ENCODE measurements at regions of chr14 and their contacts with region 1.

Region 1: DNA sequence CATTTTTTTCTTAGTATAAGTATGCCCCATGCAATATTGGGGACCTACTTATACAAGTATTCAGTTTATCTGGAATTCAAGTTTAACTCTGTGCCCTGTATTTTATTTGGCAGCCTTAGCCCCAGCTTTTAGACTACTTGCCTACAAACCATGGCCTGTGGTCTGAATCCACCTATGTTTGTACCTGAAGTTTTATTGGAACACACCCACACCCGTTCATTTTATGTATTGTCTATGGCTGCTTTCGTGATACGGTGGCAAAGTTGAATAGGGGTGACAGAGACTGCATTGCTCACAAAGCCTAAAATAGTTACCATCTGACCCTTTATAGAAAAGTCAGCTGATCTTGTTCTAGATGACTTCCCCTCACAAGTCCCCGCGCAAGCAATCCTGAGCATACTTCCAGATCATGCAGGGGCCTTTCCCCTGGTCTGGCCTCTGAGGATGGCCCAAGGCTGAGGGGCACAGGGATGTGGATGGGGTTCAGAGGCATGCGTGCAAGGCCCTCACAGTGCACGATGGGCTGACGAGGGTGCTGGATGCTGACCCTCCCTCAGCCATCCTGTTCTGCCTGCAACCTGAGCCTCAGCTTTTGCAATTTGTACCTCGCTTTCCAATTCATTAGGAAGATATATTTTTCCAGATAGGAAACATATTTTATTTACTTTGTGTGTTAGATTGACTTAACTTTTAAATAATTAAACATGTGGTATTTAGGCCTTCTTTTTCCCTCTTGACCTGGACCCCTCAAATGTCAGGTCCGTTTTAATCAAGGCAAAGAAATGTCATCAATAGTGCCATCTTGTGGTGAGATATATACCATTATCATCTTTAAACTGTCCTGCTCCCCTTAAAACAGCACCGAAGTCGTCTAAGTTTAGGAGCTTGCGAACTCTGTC is 527.3 kb upstream of the CCDC196 start:
- DNase-seq: peak; percentile 24 to 30 (median 26)
- ATAC-seq: peak; percentile 76
- H3K4me3 ChIP-seq: no peak overlapping the region
- H3K27ac ChIP-seq: no peak overlapping the region
- H3K4me1 ChIP-seq: no peaks in the 10 kb centered on the region
- H3K27me3 ChIP-seq: no peaks in the 10 kb centered on the region; a peak in 1 of 5 replicates
- CTCF ChIP-seq: peak in 1 of 3 experiments; percentile 50; a peak in 3 of 6 replicates
- EP300 ChIP-seq: no peak
- POLR2A ChIP-seq: no peak
- RAD21 ChIP-seq: peak; percentile 50 to 63

Region 2: DNA sequence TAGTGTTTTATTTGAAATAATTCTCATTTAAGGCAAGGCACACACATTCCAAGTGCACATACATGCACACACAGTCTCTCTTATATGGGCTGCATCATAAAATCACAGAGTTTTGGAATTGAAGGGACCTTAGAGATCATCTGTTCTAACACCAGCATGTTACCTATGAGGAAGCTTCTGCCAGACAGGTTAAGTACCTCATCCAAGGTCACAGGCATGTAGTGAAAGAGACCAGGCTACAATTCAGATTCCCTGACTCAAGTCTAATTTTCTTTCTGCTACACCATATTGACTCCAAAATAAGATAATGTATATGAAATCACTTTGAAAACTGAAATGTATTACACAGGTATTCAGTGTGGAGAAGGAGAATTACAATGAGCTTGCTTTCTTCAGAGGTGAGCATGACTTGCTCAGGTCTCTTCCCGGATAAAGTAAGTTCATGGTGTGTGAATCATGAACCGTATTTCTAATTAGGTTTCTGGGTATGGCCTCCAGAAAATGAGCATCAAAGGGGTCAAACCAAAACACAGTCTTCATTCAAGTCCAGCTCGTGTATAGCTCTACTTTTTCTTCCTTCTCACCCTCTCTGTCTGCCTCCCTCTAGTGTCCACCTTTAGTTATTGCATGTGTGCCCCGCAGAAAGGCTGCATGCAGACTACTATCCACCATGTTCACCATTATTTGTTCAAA is 134.5 kb before region 1 on chr14:
- CTCF ChIA-PET with region 1: no interaction called
- POLR2A ChIA-PET with region 1: no interaction called
- in situ Hi-C with region 1: no loop called
- intact Hi-C with region 1: loop called (anchors 10 kb)
- DNase-seq: peak; percentile 54 to 66 (median 62)
- ATAC-seq: peak; percentile 87
- H3K4me3 ChIP-seq: no peak overlapping the region
- H3K27ac ChIP-seq: no peak overlapping the region
- H3K4me1 ChIP-seq: no peaks in the 10 kb centered on the region
- H3K27me3 ChIP-seq: peaks cover 9 to 27% of the 10 kb centered on the region in 2 experiments; a peak in 4 of 5 replicates
- CTCF ChIP-seq: peak; percentile 60 to 74 (median 65)
- EP300 ChIP-seq: no peak
- POLR2A ChIP-seq: no peak
- RAD21 ChIP-seq: peak; percentile 67 to 69

Region 3: DNA sequence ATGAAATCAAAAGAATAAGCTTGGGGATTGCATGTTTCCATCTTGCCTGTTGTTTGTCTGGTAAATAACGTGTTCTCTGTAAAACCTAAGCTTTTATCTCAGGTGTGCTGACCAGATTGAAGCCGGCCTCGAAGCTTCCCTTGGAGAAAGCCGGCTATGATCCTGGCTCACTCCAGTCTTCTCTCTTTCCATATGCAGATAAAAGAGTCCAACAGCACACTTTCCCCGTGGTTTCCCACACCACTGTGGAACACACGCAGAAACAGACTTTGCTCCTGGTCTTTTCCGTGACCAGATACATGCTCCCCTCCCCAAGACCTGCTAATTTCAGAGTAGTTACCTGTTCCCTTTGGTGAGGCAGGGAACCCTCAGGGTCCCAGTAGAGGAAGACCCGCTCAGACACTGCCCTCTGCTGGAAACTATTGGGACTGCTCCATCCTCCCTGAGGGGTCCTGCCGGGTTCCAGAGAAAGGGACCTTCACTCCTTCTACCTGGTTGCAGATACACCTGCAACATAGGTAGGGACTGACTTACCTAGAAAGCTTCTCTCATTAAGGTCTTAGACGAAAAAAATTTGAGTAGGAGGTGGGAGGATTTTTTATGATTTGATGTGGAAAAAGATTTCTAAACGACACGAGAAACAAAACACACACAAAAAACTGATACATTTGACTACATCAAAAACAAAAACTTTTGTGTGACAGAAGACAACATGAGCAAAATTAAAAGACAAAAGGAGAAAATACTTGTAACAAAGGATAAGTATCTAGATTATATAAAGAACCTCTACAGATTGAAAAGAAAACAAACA is 111.8 kb after region 1 on chr14:
- CTCF ChIA-PET with region 1: no interaction called
- POLR2A ChIA-PET with region 1: no interaction called
- in situ Hi-C with region 1: no loop called
- intact Hi-C with region 1: loop called (anchors 2 kb)
- DNase-seq: peak; percentile 47 to 76 (median 70)
- ATAC-seq: peak; percentile 88
- H3K4me3 ChIP-seq: no peak overlapping the region
- H3K27ac ChIP-seq: no peak overlapping the region
- H3K4me1 ChIP-seq: no peaks in the 10 kb centered on the region
- H3K27me3 ChIP-seq: no peaks in the 10 kb centered on the region
- CTCF ChIP-seq: peak; percentile 60 to 78 (median 68)
- EP300 ChIP-seq: no peak
- POLR2A ChIP-seq: no peak
- RAD21 ChIP-seq: peak; percentile 48 to 68; a peak in 3 of 4 replicates

Measured in K562 (cell line).